ENCODE measurements at regions of chr2 and their contacts with region 1.

Region 1: GRCh38 chr2:121071034-121071504 is 213.9 kb downstream of the TFCP2L1 start:
- DNase-seq: peak; percentile 44 to 95 (median 77)
- ATAC-seq: peak; percentile 75 to 90 (median 81)
- H3K4me3 ChIP-seq: no peak overlapping the region
- H3K27ac ChIP-seq: no peak overlapping the region
- H3K4me1 ChIP-seq: no peaks in the 10 kb centered on the region
- H3K27me3 ChIP-seq: no peaks in the 10 kb centered on the region
- CTCF ChIP-seq: peak; percentile 93 to 97 (median 96)

Region 2: DNA sequence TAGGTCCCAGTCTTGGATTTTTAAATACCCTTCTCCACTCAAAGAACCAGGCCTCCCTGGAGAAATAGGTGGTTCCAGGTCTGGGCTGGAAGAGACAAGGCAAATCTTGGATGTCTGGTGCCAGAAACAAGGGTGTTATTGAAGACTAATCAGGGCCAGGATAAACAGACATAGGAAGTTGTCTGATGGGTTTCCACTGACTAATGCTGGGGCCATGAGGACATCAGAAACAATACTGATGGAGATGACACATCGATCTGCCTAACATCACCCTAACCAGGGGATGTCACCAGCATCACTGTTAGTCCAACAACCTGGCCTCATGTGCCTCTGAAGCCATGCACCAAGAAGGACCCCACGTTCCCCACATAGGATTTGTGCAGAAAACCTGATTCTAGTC is 377.9 kb before region 1 on chr2:
- intact Hi-C with region 1: loop called (anchors 5 kb)
- DNase-seq: peak in 1 of 6 donors; percentile 1
- ATAC-seq: no peak
- H3K4me3 ChIP-seq: no peak overlapping the region
- H3K27ac ChIP-seq: no peak overlapping the region
- H3K4me1 ChIP-seq: no peaks in the 10 kb centered on the region
- H3K27me3 ChIP-seq: peaks cover 0 to 12% (median 3%) of the 10 kb centered on the region in 4 donors
- CTCF ChIP-seq: no peak

Region 3: GRCh38 chr2:120699292-120699691 is 371.8 kb before region 1 on chr2:
- intact Hi-C with region 1: loop called (anchors 5 kb)
- DNase-seq: peak in 1 of 6 donors; percentile 23
- ATAC-seq: no peak
- H3K4me3 ChIP-seq: no peak overlapping the region
- H3K27ac ChIP-seq: no peak overlapping the region
- H3K4me1 ChIP-seq: no peaks in the 10 kb centered on the region
- H3K27me3 ChIP-seq: peaks cover 0 to 10% (median 3%) of the 10 kb centered on the region in 4 donors
- CTCF ChIP-seq: no peak

Region 4: GRCh38 chr2:120735746-120736170 is 335.3 kb before region 1 on chr2 and contains the start of gene GLI2:
- intact Hi-C with region 1: loop called in 1 of 3 experiments (anchors 5 kb)
- DNase-seq: peak; percentile 47 to 84 (median 62)
- ATAC-seq: peak; percentile 71 to 89 (median 80)
- H3K4me3 ChIP-seq: peak within 1 kb of the TSS; percentile 19 to 47 (median 26)
- H3K27ac ChIP-seq: no peak within 1 kb of the TSS
- H3K4me1 ChIP-seq: peaks cover 0 to 6% (median 0%) of the 10 kb centered on the region in 3 donors
- H3K27me3 ChIP-seq: peaks cover 0 to 31% (median 8%) of the 10 kb centered on the region in 4 donors
- CTCF ChIP-seq: peak in 3 of 4 donors; percentile 35 to 50 (median 49)
- total RNA-seq, gene GLI2: 0.14 to 3.2 (median 0.53) TPM

Region 5: DNA sequence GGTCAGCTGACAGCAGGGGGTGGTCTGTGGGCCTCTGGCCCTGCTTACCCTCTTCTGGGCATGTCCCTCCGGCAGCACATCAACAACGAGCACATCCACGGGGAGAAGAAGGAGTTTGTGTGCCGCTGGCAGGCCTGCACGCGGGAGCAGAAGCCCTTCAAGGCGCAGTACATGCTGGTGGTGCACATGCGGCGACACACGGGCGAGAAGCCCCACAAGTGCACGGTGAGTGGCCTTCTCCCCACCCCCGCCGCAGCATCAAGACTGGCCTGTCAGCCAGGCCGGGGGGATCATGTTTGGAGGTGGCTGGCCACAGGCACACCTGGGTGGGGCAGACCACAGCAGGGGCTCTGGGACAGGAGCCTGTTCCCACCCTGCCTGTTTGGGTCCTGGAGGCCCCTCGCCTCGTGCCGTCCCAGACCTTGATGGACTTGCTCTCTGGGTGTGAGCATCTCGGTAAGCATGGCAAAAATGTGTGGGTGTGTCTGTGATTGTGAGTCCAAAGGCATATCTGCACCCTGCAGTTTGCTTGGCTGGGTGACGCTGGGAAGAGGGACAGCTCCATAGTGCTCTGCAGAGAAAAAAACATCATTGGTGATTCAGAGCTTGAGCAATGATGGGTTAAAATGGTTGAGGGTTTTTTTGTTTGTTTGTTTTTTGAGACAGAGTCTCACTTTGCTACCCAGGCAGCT is 92.6 kb before region 1 on chr2:
- intact Hi-C with region 1: no loop called
- DNase-seq: peak in 2 of 6 donors; percentile 48 to 55
- ATAC-seq: no peak
- H3K4me3 ChIP-seq: no peak overlapping the region
- H3K27ac ChIP-seq: no peak overlapping the region
- H3K4me1 ChIP-seq: peaks cover 0 to 3% (median 0%) of the 10 kb centered on the region in 3 donors
- H3K27me3 ChIP-seq: no peaks in the 10 kb centered on the region
- CTCF ChIP-seq: no peak

Region 6: GRCh38 chr2:121155502-121156056 is 84.5 kb after region 1 on chr2:
- intact Hi-C with region 1: no loop called
- DNase-seq: peak; percentile 82 to 95 (median 90)
- ATAC-seq: peak; percentile 96 to 99 (median 98)
- H3K4me3 ChIP-seq: peak overlapping the region in 1 of 4 donors; percentile 12
- H3K27ac ChIP-seq: peak overlapping the region; percentile 22 to 65 (median 45)
- H3K4me1 ChIP-seq: peaks cover 4 to 6% (median 6%) of the 10 kb centered on the region in 3 donors
- H3K27me3 ChIP-seq: no peaks in the 10 kb centered on the region
- CTCF ChIP-seq: no peak